ENCODE measurements at regions of chr7 and their contacts with region 1.

Region 1: DNA sequence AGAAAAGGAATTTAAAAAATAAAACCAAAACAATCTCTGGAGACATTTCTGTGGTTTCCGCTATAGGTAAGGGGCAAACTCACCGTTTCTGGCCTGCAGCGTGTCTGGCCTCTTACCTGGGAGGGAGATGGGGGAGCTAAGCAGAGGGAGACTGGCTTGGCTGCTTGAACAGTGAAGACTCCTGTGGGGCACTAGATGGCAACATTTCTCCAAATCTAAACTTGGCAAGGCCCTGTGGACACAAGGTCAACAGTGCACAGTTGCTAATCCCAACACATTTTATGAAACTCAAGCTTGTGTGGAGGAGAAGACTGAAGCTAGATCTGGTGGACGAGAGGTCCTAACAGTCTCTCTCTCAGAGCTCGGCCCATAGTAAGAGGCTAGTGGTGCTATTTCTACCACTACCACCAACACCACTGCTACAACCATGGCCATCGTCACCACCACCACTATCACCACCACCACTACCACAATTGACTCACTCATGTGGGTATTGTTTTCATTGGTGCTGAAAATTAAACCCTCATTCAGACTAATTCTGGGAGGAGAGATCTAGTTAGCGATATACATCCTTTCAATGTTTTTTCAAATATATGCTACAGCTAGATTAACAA is 28.4 kb upstream of the CDHR3 start:
- DNase-seq: no peak
- ATAC-seq: peak; percentile 89 to 91

Region 2: GRCh38 chr7:106041140-106041717 is 106.5 kb after region 1 on chr7:
- intact Hi-C with region 1: loop called in 1 of 2 experiments (anchors 10 kb)
- DNase-seq: no peak
- ATAC-seq: no peak

Measured in left cardiac atrium (tissue), 4 donors.